ENCODE measurements at regions of chr10 and their contacts with region 1.

Region 1: DNA sequence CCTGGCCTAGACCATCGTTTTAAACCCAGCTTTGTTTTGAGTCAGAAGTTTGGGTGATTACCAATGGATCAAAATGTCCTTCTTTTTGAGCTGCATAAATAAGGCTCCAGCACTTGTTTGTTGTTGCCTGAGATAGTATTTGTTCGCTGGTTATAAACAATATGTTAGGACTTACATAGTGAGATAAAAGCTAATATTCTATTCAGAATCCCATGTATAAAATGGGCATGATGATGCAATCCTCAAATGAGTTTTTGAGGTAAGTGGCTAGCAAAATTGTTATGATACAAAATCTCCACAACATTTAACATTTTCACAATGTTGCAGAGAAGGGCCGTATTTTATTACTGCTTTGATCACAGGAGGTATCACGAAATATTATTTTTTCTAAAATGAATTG is 48.5 kb downstream of the CFAP43 start:
- DNase-seq: no peak
- H3K4me3 Mint-ChIP-seq: no peak overlapping the region
- H3K27ac Mint-ChIP-seq: no peak overlapping the region
- H3K4me1 Mint-ChIP-seq: no peaks in the 10 kb centered on the region
- H3K27me3 Mint-ChIP-seq: peaks cover 14% of the 10 kb centered on the region

Region 2: DNA sequence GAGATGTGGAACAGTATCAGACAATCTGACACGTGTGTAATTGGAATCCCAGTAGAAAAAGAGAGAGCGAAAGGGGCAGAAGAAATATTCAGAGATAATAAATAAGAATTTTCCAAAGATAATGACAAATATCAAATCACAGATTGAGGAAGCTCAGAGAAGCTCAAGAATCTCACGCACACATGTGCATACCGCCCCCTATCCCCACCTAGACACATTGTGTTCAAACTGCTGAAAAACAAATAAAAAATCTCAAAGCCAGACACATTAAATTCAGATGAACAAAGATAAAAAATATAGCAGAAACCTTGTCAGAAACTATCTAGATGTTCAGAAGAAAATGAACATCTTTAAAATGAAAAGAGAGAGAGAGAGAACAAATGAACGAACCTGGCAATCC is 44.5 kb before region 1 on chr10:
- intact Hi-C with region 1: loop called (anchors 1 kb)
- DNase-seq: no peak
- H3K4me3 Mint-ChIP-seq: no peak overlapping the region
- H3K27ac Mint-ChIP-seq: no peak overlapping the region
- H3K4me1 Mint-ChIP-seq: no peaks in the 10 kb centered on the region
- H3K27me3 Mint-ChIP-seq: peaks cover 36% of the 10 kb centered on the region

Region 3: DNA sequence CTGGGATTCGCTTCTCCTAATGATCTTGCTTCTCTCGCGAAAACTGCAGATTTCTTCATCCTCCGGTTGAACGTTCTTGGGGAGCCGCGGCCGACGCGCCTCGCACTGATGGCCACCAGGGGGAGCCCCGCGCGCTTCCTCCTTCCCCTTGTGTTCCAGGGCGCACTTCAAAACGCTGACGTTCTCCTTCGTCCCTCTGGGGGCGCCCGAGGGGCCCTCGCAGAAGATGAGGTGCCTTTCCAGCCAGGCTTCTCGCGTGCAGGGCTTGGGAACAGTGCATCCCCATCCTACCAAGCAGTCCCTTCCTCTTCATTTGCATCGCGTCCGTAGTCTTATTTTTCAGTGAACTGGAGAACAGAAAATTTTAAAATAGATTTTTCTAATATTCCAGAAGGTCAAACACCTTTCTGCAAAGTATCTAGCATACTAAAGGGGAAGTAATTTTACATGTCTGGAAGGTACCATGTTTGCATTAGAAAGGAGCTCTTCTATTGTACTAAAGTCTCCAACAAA is 107.8 kb after region 1 on chr10:
- intact Hi-C with region 1: no loop called
- DNase-seq: peak; percentile 96
- H3K4me3 Mint-ChIP-seq: no peak overlapping the region
- H3K27ac Mint-ChIP-seq: no peak overlapping the region
- H3K4me1 Mint-ChIP-seq: peaks cover 13% of the 10 kb centered on the region
- H3K27me3 Mint-ChIP-seq: peaks cover 32% of the 10 kb centered on the region

Region 4: DNA sequence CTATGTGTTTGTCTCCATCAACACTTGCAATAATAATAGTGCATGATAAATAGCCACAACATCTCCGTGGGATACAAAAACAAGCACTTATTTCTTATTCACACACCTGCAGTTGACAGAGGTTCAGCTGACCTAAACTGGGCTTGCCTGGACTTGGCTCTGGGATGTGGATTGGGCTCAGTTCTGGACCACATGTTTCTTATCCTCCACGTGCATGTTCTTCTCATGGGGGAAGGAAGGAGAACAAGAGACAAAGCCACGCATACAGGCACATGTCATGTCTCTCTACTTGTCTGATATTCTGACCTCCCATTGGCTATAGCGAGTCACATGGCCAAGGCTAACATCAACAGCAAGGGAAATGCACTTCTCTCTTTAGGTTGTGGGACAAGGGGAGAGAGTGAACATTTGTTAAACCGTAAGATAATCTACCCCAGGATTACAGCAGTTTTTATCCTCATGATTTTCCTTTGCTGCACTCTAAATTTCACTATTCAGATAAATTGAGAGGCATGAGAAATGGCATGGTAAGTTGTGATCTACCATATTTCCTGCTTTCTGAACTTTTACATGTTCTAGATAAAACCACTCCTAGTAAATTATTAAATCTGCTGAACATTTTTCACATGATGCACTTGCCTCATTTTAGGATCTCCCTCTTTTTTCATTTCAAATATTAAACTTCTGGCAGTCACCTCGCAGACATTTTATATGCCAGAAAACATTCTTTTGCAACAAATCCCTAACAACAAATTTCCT is 203.6 kb after region 1 on chr10:
- intact Hi-C with region 1: no loop called
- DNase-seq: no peak
- H3K4me3 Mint-ChIP-seq: no peak overlapping the region
- H3K27ac Mint-ChIP-seq: no peak overlapping the region
- H3K4me1 Mint-ChIP-seq: peaks cover 11% of the 10 kb centered on the region
- H3K27me3 Mint-ChIP-seq: peaks cover 25% of the 10 kb centered on the region